ENCODE measurements at regions of chr22 and their contacts with region 1.

Region 1: GRCh38 chr22:35231585-35232084 is 25.7 kb upstream of the HMGXB4 start:
- DNase-seq: no peak
- H3K4me3 ChIP-seq: no peak overlapping the region
- H3K27me3 ChIP-seq: no peaks in the 10 kb centered on the region; the same call in none of the 2 replicates
- CTCF ChIP-seq: peak; percentile 95

Region 2: DNA sequence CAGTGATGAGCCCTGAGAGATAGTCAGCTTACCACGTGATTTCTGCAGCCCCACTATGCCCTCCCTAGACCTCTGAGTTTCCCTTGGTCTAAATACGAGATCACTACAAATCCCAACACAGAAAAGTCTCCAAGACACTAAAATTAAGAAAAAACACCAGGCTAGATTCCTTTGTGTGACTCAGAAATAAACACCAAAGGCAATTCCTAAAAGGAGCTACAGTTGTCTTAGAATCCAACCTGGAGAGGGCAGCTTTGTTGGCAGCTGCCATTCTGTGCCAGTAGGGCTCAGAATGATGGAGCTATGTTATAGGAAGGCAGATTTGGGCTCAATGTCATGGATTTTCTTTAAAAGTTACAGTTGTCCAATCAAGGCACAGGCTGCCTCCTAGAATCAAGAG is 11.4 kb before region 1 on chr22:
- CTCF ChIA-PET with region 1: interaction called, 20 read pairs
- POLR2A ChIA-PET with region 1: no interaction called
- DNase-seq: no peak
- H3K4me3 ChIP-seq: no peak overlapping the region
- H3K27me3 ChIP-seq: no peaks in the 10 kb centered on the region; the same call in 1 of the 2 replicates
- CTCF ChIP-seq: no peak

Measured in BJ (cell line).